Heart right ventricle (tissue), 16 donors: ENCODE measurements at regions of chr2 and their contacts with region 1.

Region 1: GRCh38 chr2:141182246-141182645 is 948.6 kb downstream of the LRP1B start:
- DNase-seq: no peak
- ATAC-seq: no peak
- H3K4me3 ChIP-seq: no peak overlapping the region
- H3K27ac ChIP-seq: no peak overlapping the region
- H3K4me1 ChIP-seq: no peaks in the 10 kb centered on the region
- H3K27me3 ChIP-seq: no peaks in the 10 kb centered on the region
- CTCF ChIP-seq: no peak

Region 2: DNA sequence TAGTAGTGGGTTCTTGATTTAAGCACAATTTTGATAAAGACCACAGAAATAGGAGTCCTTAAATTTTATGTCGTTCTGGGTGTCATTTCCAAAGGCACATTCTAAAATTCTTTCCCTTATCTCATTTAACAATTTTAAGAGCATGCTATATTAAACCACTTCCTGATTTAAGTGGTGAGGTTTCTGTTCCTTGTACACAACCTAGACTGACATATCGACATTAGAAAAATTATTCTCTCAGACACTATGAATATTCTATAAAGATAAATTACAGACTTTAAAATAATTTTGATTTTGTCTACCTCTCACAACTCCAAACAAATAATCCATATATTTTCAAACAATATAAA is 24.8 kb after region 1 on chr2:
- intact Hi-C with region 1: loop called in 1 of 10 experiments (anchors 2 kb)
- DNase-seq: no peak
- ATAC-seq: peak in 6 of 8 donors; percentile 57 to 82 (median 73)
- H3K4me3 ChIP-seq: no peak overlapping the region
- H3K27ac ChIP-seq: peak overlapping the region in 7 of 10 donors; percentile 11 to 67 (median 48)
- H3K4me1 ChIP-seq: peaks cover 0 to 9% (median 0%) of the 10 kb centered on the region in 9 donors
- H3K27me3 ChIP-seq: no peaks in the 10 kb centered on the region
- CTCF ChIP-seq: no peak

Region 3: GRCh38 chr2:141301551-141301950 is 119.3 kb after region 1 on chr2:
- intact Hi-C with region 1: no loop called
- DNase-seq: no peak
- ATAC-seq: no peak
- H3K4me3 ChIP-seq: no peak overlapping the region
- H3K27ac ChIP-seq: no peak overlapping the region
- H3K4me1 ChIP-seq: no peaks in the 10 kb centered on the region
- H3K27me3 ChIP-seq: no peaks in the 10 kb centered on the region
- CTCF ChIP-seq: no peak